Mammary epithelial cell (primary cell): ENCODE measurements at regions of chr21 and their contacts with region 1.

Region 1: DNA sequence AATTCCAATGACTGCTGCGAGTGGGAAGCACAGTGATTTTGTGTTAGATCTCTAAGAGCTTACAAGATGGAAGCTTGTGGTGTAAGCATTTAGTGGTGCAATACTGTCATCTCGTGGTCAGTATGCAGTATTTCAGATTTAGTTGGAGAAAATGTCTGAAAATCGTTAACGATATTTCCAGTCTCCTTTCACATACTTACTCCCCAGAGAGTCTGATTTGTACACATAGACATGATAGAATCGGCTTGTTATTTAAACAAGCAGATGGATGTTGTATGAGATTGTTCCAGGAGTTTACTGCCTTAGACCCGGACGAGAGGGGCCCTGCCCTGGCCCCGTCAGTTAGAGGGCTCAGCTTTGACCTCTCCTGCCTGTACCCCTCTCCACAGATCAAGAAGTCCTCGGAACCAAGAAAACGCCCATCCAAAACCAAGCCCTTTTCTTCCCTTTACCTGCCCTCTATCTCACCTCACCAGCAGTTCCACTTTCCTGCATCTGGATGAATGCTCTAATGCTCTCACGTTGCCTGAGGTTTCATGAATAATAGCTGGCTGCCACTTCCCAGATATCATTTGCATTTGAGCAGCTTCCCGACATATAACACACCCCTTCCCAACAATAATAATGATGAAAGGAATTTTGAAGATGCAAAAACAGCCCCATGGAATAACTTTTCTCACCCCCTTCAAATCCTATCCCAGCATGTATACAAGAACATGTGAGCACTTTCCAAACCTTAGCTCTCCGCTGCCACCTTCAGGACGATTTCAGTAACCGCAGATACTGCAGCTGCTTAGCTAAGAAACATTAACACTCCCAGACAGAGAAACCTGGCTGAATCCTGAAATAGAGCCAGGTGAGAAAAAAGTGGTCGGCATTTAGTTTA is 247.3 kb downstream of the LTN1 start:
- DNase-seq: peak; percentile 65
- H3K4me3 ChIP-seq: peak overlapping the region; percentile 21 to 52 (median 47)
- H3K27ac ChIP-seq: peak overlapping the region; percentile 21
- H3K4me1 ChIP-seq: no peaks in the 10 kb centered on the region
- H3K27me3 ChIP-seq: no peaks in the 10 kb centered on the region
- CTCF ChIP-seq: peak; percentile 97 to 98

Region 2: GRCh38 chr21:26769613-26770188 is 1975.7 kb before region 1 on chr21:
- CTCF ChIA-PET with region 1: no interaction called
- dilution Hi-C with region 1: no loop called
- in situ Hi-C with region 1: no loop called
- intact Hi-C with region 1: loop called (anchors 1 kb)
- DNase-seq: no peak
- H3K4me3 ChIP-seq: no peak overlapping the region
- H3K27ac ChIP-seq: no peak overlapping the region
- H3K4me1 ChIP-seq: no peaks in the 10 kb centered on the region
- H3K27me3 ChIP-seq: peaks cover 1% of the 10 kb centered on the region
- CTCF ChIP-seq: peak; percentile 49 to 58

Region 3: GRCh38 chr21:26865857-26866256 is 1879.5 kb before region 1 on chr21:
- CTCF ChIA-PET with region 1: no interaction called
- dilution Hi-C with region 1: no loop called
- in situ Hi-C with region 1: no loop called
- intact Hi-C with region 1: loop called (anchors 5 kb)
- DNase-seq: no peak
- H3K4me3 ChIP-seq: no peak overlapping the region
- H3K27ac ChIP-seq: no peak overlapping the region
- H3K4me1 ChIP-seq: no peaks in the 10 kb centered on the region
- H3K27me3 ChIP-seq: no peaks in the 10 kb centered on the region
- CTCF ChIP-seq: no peak

Region 4: DNA sequence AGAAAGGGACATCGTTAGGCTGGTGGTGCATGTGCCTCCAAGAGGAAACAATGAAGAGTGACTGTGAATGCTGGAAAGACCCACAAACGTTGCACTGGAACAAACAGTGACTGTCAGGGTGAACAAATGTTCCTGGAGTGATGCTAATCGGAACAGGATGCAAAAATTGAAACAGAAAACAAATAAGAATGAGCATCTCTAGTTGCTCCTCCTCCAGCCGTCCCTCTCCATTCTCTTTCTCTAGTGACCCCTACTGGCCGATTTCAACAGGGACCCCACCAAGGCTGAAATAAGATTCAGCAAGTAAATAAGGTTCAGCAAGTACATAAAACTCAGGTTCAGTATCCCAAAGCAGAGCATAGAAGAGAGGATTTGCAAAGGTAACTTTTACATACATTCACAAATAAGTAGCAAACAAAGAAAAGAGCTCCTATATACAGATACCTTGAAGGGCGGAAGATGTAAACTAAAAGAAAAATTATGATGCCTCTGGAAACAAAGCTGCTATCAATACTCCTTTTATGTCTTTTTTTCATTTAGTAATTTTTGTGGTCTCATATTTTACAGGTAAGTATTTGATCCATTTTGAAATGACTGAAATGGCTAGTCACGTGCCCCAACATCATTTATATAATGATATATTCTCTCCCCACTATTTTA is 942.4 kb before region 1 on chr21:
- CTCF ChIA-PET with region 1: no interaction called
- dilution Hi-C with region 1: no loop called
- in situ Hi-C with region 1: no loop called
- intact Hi-C with region 1: loop called (anchors 2 kb)
- DNase-seq: peak; percentile 43
- H3K4me3 ChIP-seq: no peak overlapping the region
- H3K27ac ChIP-seq: no peak overlapping the region
- H3K4me1 ChIP-seq: no peaks in the 10 kb centered on the region
- H3K27me3 ChIP-seq: no peaks in the 10 kb centered on the region
- CTCF ChIP-seq: peak; percentile 72 to 80

Region 5: DNA sequence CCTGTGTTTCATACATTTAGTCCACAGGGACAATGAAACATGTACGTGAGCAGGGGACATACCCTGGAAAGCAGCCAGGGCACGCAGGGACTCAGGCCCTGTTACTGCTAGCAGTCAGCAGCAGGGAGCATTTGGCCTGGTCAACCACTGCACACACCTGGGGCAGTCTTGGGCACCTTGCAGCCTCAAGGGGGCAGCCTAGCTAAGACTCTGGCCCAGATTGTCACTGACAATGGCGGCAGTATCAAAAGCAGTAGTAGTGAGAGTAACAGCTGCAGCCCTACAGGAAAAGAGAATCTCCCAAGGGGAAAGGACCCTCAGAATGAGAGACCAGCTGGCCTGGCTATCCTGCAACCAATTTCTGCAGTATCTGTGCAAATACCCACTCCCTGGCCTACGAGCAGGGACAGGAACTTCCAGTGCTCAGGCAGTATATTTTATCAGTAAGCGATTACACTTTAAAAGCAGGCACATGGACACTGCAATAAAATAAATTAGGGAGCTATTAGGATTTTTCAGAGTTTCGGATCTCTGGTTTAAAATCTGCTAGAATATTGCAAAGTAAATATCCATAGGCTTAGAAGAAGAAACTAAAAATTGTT is 228.3 kb before region 1 on chr21:
- CTCF ChIA-PET with region 1: interaction called, 5 read pairs
- dilution Hi-C with region 1: no loop called
- in situ Hi-C with region 1: loop called in 1 of 2 experiments (anchors 10 kb)
- intact Hi-C with region 1: loop called (anchors 1 kb)
- DNase-seq: peak; percentile 47
- H3K4me3 ChIP-seq: no peak overlapping the region
- H3K27ac ChIP-seq: no peak overlapping the region
- H3K4me1 ChIP-seq: peaks cover under 1% of the 10 kb centered on the region
- H3K27me3 ChIP-seq: no peaks in the 10 kb centered on the region
- CTCF ChIP-seq: peak; percentile 59 to 91

Region 6: DNA sequence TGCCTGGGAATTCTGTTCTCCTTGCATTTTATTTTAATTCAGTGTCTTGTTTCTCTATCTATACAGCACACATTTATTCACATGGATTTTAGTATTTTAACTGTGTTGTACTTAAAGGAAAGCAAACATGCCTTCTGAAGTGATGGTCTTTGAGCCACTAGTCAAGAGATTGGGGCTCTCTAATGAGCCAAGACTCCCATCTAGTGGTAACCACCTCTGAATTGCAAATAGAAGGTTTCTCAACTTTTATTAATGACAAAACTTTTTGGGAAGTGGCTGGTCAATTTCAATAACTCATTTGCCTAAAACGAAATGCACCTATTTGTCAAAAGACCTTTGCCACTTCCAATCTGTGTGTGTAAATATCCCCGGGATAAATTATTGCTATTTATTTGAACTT is 47.7 kb after region 1 on chr21:
- CTCF ChIA-PET with region 1: no interaction called
- dilution Hi-C with region 1: no loop called
- in situ Hi-C with region 1: no loop called
- intact Hi-C with region 1: loop called (anchors 1 kb)
- DNase-seq: no peak
- H3K4me3 ChIP-seq: no peak overlapping the region
- H3K27ac ChIP-seq: no peak overlapping the region
- H3K4me1 ChIP-seq: no peaks in the 10 kb centered on the region
- H3K27me3 ChIP-seq: no peaks in the 10 kb centered on the region
- CTCF ChIP-seq: peak; percentile 14 to 35